ENCODE measurements at regions of chr11 and their contacts with region 1.

Region 1: GRCh38 chr11:71298761-71299181 is 46.4 kb upstream of the SHANK2 start:
- DNase-seq: no peak
- H3K4me3 Mint-ChIP-seq: peak overlapping the region; percentile 61
- H3K27ac Mint-ChIP-seq: peak overlapping the region; percentile 98
- H3K4me1 Mint-ChIP-seq: peaks cover 50% of the 10 kb centered on the region
- H3K27me3 Mint-ChIP-seq: no peaks in the 10 kb centered on the region
- CTCF ChIP-seq: no peak

Region 2: GRCh38 chr11:71179898-71180605 is 118.7 kb before region 1 on chr11:
- CTCF ChIA-PET with region 1: no interaction called
- intact Hi-C with region 1: no loop called
- DNase-seq: peak; percentile 11
- H3K4me3 Mint-ChIP-seq: no peak overlapping the region
- H3K27ac Mint-ChIP-seq: no peak overlapping the region
- H3K4me1 Mint-ChIP-seq: peaks cover 23% of the 10 kb centered on the region
- H3K27me3 Mint-ChIP-seq: no peaks in the 10 kb centered on the region
- CTCF ChIP-seq: no peak

Region 3: GRCh38 chr11:71283881-71284441 is 14.8 kb before region 1 on chr11:
- CTCF ChIA-PET with region 1: interaction called, 12 read pairs
- intact Hi-C with region 1: loop called (anchors 1 kb)
- DNase-seq: peak; percentile 95
- H3K4me3 Mint-ChIP-seq: peak overlapping the region; percentile 70
- H3K27ac Mint-ChIP-seq: peak overlapping the region; percentile 88
- H3K4me1 Mint-ChIP-seq: peaks cover 58% of the 10 kb centered on the region
- H3K27me3 Mint-ChIP-seq: no peaks in the 10 kb centered on the region
- CTCF ChIP-seq: no peak

Region 4: DNA sequence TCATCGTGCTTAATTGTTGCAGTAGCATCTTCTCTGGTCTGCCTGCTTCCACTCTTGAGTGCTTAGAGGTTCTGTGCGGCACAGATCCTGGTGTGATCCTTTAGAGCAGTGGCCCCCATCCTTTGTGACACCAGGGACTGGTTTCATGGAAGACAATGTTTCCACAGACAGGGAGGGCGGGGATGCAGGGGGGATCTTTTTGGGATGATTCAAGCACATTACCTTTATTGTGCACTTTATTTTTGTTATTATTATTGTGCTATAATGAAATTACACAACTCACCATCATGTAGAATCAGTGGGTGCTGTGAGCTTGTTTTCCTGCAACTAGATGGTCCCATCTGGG is 30.4 kb after region 1 on chr11:
- CTCF ChIA-PET with region 1: interaction called, 10 read pairs
- intact Hi-C with region 1: no loop called
- DNase-seq: no peak
- H3K4me3 Mint-ChIP-seq: no peak overlapping the region
- H3K27ac Mint-ChIP-seq: no peak overlapping the region
- H3K4me1 Mint-ChIP-seq: no peaks in the 10 kb centered on the region
- H3K27me3 Mint-ChIP-seq: peaks cover 13% of the 10 kb centered on the region
- CTCF ChIP-seq: no peak

Measured in Calu3 (cell line).